ENCODE measurements at regions of chr15 and their contacts with region 1.

Region 1: DNA sequence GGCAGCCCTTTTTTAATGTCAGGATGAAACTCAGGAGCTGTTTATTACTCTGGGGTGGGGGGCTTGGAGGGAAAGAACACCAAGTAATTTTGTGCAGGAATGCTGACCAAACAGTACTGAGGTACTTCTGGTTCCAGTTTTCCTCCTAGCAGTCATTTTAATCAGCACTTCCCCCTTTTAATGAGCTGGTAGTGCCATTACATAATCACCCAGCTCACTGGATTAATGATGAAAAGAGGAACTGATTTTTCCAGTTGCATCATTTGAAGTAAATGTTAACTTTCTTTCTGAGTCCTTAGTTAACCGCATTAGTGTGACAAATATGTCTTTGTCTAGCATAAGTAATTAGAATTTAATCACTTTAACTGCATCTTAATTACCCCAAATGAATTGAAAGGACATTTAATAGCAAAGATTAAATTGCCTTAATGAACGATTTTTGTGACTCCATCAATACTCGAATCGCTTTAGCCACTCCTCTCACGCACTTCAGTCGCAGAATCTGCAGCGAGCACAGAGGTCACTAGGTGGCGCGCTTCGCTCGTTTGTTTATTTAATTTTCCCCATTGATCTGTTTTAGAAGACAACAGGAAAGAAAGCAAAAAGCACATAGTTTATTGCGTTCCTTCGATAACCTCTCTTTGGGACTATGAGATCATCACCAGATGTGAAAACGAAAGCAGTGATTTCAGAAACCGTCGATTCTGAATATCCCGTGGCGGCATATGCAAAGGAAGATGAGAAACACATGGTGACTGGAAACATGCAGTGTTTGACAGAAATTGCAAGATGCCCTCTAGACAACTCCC is 9.8 kb downstream of the ONECUT1 start:
- DNase-seq: peak; percentile 46 to 83 (median 67)
- ATAC-seq: peak; percentile 48 to 52
- H3K4me3 ChIP-seq: peak overlapping the region; percentile 16
- H3K27ac ChIP-seq: no peak overlapping the region
- H3K4me1 ChIP-seq: peaks cover 2% of the 10 kb centered on the region
- H3K27me3 ChIP-seq: peaks cover 4% of the 10 kb centered on the region

Region 2: GRCh38 chr15:52568601-52569256 is 211.6 kb before region 1 on chr15 and contains the start of gene ARPP19:
- intact Hi-C with region 1: no loop called
- DNase-seq: peak; percentile 88 to 94 (median 94)
- ATAC-seq: peak; percentile 94 to 96
- H3K4me3 ChIP-seq: peak within 1 kb of the TSS; percentile 82
- H3K27ac ChIP-seq: peak within 1 kb of the TSS; percentile 80
- H3K4me1 ChIP-seq: peaks cover 3% of the 10 kb centered on the region
- H3K27me3 ChIP-seq: no peaks in the 10 kb centered on the region
- total RNA-seq, gene ARPP19: 146 to 179 (median 164) TPM

Region 3: GRCh38 chr15:53197426-53197839 is 417.1 kb after region 1 on chr15:
- intact Hi-C with region 1: loop called in 3 of 4 experiments (anchors 5 to 10 kb)
- DNase-seq: peak; percentile 39 to 76 (median 62)
- ATAC-seq: peak; percentile 59 to 61
- H3K4me3 ChIP-seq: no peak overlapping the region
- H3K27ac ChIP-seq: no peak overlapping the region
- H3K4me1 ChIP-seq: no peaks in the 10 kb centered on the region
- H3K27me3 ChIP-seq: no peaks in the 10 kb centered on the region

Region 4: GRCh38 chr15:53203454-53203853 is 423.1 kb after region 1 on chr15:
- intact Hi-C with region 1: loop called in 3 of 4 experiments (anchors 5 to 10 kb)
- DNase-seq: no peak
- ATAC-seq: no peak
- H3K4me3 ChIP-seq: no peak overlapping the region
- H3K27ac ChIP-seq: no peak overlapping the region
- H3K4me1 ChIP-seq: no peaks in the 10 kb centered on the region
- H3K27me3 ChIP-seq: no peaks in the 10 kb centered on the region

Region 5: DNA sequence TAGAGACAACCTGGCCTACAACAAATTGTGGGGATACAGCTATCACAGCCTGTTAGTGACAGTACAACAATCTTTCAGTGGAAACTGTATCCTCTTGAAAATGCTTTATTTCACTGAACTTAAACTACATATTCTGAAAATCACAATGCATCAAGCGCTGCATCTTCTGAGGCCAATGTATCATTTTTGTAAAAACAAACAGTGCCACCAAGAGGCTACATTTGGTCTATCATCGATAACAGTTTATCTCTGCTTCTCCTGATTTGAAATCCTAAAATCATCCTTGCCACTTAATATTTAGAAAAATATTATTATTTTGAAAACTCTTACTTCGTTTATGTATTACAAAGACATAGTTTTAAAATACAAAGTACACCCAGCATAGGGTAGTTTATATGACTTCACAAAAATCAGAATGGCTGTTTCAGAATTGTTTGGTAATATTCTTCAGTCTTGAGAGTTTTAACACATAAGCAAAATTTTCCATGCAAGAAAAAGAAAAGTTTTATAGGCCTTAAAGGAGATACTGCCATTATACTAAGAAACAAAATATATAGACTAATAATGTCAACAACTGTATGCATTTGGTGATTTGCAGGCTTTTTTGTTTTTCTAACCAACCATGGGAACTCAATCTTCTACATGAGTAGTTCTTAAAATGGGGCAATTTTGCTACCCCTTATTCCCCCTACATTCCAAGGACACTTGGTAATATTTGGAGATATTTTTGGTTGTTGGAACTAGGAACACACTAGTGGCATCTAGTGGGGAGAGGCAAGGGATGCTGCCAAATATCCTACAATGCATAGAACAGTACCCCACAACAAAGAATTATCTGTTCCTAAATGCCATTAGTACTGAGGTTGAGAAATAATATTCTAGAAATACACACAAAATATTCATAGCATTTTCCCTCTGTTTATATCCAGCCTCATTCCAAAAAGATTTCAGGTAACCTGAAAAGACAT is 936.8 kb after region 1 on chr15:
- intact Hi-C with region 1: loop called in 3 of 4 experiments (anchors 5 kb)
- DNase-seq: no peak
- ATAC-seq: no peak
- H3K4me3 ChIP-seq: no peak overlapping the region
- H3K27ac ChIP-seq: no peak overlapping the region
- H3K4me1 ChIP-seq: no peaks in the 10 kb centered on the region
- H3K27me3 ChIP-seq: no peaks in the 10 kb centered on the region